ENCODE measurements at regions of chr7 and their contacts with region 1.

Region 1: DNA sequence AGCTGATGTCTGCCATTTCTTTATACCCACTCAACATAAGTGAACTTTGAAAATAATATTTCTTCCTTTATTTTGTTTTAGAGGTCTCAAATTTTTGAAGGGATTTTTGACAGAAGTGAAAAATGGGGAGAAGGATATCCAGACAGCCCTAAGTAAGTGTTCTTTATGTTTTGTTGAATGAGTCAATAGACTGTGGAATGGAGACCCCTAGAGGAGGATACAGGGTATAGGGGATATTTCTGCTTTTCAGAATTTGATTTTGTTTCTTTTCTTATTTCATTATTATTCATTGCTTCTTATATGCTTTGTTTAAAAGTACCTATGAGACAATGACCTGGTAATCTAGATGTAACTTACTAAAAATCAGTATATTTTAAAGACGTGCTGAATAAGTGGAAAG is 34.4 kb downstream of the PLEKHA8 start:
- DNase-seq: no peak
- H3K4me3 ChIP-seq: no peak overlapping the region
- CTCF ChIP-seq: peak; percentile 37

Region 2: DNA sequence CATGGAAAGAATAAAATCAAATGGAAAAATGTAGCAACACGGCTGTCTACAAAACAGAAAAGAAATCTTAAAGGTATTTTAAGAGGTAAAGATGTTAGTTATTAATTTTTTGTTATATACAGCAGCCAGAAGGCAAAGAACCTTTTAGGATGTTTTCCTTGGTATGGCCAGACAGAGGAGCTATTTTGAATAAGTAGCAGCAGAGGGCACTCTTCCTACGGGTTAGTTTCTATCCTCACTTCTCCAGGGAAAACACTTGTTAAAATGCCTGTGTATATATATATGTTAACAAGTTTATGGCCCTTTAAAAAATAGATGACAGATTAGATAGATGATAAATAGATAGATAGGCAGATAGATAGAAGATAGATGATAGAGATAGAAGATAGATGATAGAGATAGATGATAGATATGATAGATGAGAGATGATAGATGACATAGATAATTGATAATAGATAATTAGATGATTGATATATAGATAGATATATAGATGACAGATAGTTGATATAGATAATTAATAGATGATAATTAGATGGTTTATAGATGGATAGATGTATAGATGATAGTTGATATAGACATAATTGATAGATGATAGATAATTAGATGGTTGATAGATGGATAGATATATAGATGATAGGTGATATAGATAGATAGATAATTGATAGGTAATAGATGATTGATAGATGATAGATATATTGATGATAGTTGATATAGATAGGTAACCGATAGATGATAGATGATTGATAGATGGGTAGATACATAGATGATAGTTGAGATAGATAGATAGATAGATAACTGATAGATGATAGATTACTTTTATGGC is 314.1 kb before region 1 on chr7:
- CTCF ChIA-PET with region 1: interaction called, 16 read pairs
- POLR2A ChIA-PET with region 1: no interaction called
- DNase-seq: peak; percentile 10
- H3K4me3 ChIP-seq: no peak overlapping the region
- CTCF ChIP-seq: peak; percentile 40

Region 3: GRCh38 chr7:29921404-29922010 is 141.1 kb before region 1 on chr7:
- CTCF ChIA-PET with region 1: interaction called, 23 read pairs
- POLR2A ChIA-PET with region 1: no interaction called
- DNase-seq: no peak
- H3K4me3 ChIP-seq: no peak overlapping the region
- CTCF ChIP-seq: peak; percentile 87

Region 4: GRCh38 chr7:29940199-29940598 is 122.4 kb before region 1 on chr7:
- CTCF ChIA-PET with region 1: interaction called, 25 read pairs
- POLR2A ChIA-PET with region 1: no interaction called
- DNase-seq: no peak
- H3K4me3 ChIP-seq: no peak overlapping the region
- CTCF ChIP-seq: no peak

Region 5: DNA sequence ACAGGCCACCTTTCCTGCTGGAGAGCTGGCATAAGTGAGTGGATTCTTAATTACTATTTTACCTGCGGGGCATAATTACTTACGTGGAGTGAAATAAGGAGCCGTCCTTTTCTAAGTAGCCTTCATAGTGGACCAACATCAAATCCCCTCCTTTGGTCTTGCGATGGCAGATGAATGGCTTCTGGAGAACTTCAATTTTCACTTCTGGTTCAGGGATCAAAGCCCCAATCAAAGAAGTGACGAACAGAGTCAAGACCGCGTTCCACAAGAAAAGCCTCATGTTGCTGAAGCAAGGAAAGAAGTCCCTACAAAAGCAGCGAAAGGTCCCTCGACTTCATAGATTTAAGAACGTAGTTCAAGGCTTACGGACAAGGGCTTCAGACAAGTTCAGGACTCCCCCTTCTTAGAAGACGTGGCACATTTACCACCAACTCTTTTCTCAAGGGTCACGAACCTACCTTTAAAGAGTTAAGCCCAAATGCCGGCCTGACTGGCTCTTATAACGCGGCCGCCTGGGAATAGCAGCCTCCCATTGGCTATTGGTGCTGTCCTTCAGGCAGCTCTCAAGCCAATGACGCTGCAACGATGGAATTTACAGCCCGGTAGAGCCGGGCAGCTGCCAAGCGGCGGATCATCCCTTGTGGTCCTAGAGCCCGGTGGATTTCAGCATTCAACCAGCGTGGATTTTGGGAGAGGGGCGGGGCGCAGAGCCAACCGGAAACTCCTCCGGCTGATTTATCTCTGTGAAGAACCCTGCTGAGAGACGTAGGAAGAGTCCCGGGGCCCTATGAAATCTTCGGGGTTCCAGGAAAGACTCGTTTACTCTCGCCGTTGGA is 36.1 kb before region 1 on chr7 and contains the start of gene FKBP14:
- CTCF ChIA-PET with region 1: interaction called, 20 read pairs
- POLR2A ChIA-PET with region 1: no interaction called
- DNase-seq: peak; percentile 97
- H3K4me3 ChIP-seq: peak within 1 kb of the TSS; percentile 81
- CTCF ChIP-seq: no peak

Region 6: GRCh38 chr7:30048582-30048981 is 14.0 kb before region 1 on chr7:
- CTCF ChIA-PET with region 1: interaction called, 32 read pairs
- POLR2A ChIA-PET with region 1: no interaction called
- DNase-seq: no peak
- H3K4me3 ChIP-seq: no peak overlapping the region
- CTCF ChIP-seq: no peak